ENCODE measurements at regions of chr5 and their contacts with region 1.

Region 1: GRCh38 chr5:76544268-76544926 is 78.8 kb downstream of the F2RL2 start:
- DNase-seq: peak; percentile 37 to 85 (median 57)
- ATAC-seq: peak; percentile 20
- H3K4me3 ChIP-seq: peak overlapping the region; percentile 7
- H3K4me3 Mint-ChIP-seq: peak overlapping the region; percentile 78
- H3K27ac ChIP-seq: peak overlapping the region; percentile 77 to 80
- H3K27ac Mint-ChIP-seq: peak overlapping the region; percentile 98
- H3K4me1 ChIP-seq: peaks cover 76% of the 10 kb centered on the region
- H3K4me1 Mint-ChIP-seq: peaks cover 84% of the 10 kb centered on the region
- H3K27me3 ChIP-seq: no peaks in the 10 kb centered on the region
- H3K27me3 Mint-ChIP-seq: no peaks in the 10 kb centered on the region
- CTCF ChIP-seq: peak; percentile 86

Region 2: GRCh38 chr5:76074487-76075065 is 469.8 kb before region 1 on chr5:
- CTCF ChIA-PET with region 1: no interaction called
- POLR2A ChIA-PET with region 1: no interaction called
- intact Hi-C with region 1: loop called in 1 of 2 experiments (anchors 10 kb)
- DNase-seq: peak in 5 of 14 experiments; percentile 9 to 50 (median 42)
- ATAC-seq: peak; percentile 66
- H3K4me3 ChIP-seq: no peak overlapping the region
- H3K4me3 Mint-ChIP-seq: no peak overlapping the region
- H3K27ac ChIP-seq: no peak overlapping the region
- H3K27ac Mint-ChIP-seq: no peak overlapping the region
- H3K4me1 ChIP-seq: no peaks in the 10 kb centered on the region
- H3K4me1 Mint-ChIP-seq: no peaks in the 10 kb centered on the region
- H3K27me3 ChIP-seq: peaks cover 8 to 15% of the 10 kb centered on the region in 2 experiments
- H3K27me3 Mint-ChIP-seq: peaks cover 89% of the 10 kb centered on the region
- CTCF ChIP-seq: peak; percentile 41

Region 3: GRCh38 chr5:76175051-76175666 is 369.2 kb before region 1 on chr5:
- CTCF ChIA-PET with region 1: interaction called, 5 read pairs
- POLR2A ChIA-PET with region 1: no interaction called
- intact Hi-C with region 1: loop called in 1 of 2 experiments (anchors 10 kb)
- DNase-seq: peak; percentile 24 to 74 (median 40)
- ATAC-seq: peak; percentile 64
- H3K4me3 ChIP-seq: no peak overlapping the region
- H3K4me3 Mint-ChIP-seq: peak overlapping the region; percentile 73
- H3K27ac ChIP-seq: peak overlapping the region in 1 of 2 donors; percentile 35
- H3K27ac Mint-ChIP-seq: no peak overlapping the region
- H3K4me1 ChIP-seq: peaks cover 14% of the 10 kb centered on the region
- H3K4me1 Mint-ChIP-seq: peaks cover 21% of the 10 kb centered on the region
- H3K27me3 ChIP-seq: no peaks in the 10 kb centered on the region
- H3K27me3 Mint-ChIP-seq: no peaks in the 10 kb centered on the region
- CTCF ChIP-seq: peak; percentile 79

Region 4: DNA sequence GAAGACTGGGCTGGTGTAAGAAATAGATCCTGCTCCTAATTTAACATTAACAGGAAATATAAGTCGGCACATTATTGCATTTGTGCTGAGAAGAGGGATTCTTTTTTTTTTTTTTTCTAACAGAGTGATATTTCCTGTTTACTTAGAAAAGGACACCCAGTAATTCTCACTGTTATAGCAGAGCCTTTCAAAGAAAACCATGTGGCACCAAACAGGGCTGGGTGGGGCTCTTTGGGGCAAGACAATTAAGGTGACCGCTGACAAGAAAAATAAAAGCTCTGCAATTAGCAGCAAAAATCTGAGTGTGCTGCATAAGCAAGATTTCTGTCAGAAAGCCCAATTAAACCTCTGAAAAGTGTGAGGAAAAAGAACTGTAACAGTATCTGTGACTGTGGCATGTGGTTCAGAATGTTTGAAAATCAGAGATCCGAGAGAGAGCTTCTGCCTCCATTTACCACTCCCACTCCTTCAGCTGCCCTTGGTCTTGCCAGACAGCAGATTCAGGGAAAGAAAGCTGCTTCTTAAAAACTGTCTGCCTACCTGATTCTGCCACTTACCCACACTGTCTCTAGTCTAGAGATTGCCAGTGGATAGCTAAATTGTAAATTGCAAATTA is 218.4 kb before region 1 on chr5:
- CTCF ChIA-PET with region 1: interaction called, 6 read pairs
- POLR2A ChIA-PET with region 1: interaction called, 18 read pairs
- intact Hi-C with region 1: no loop called
- DNase-seq: peak in 11 of 14 experiments; percentile 13 to 88 (median 45)
- ATAC-seq: peak; percentile 87
- H3K4me3 ChIP-seq: no peak overlapping the region
- H3K4me3 Mint-ChIP-seq: peak overlapping the region; percentile 59
- H3K27ac ChIP-seq: peak overlapping the region; percentile 44 to 63
- H3K27ac Mint-ChIP-seq: peak overlapping the region; percentile 87
- H3K4me1 ChIP-seq: peaks cover 59% of the 10 kb centered on the region
- H3K4me1 Mint-ChIP-seq: peaks cover 63% of the 10 kb centered on the region
- H3K27me3 ChIP-seq: no peaks in the 10 kb centered on the region
- H3K27me3 Mint-ChIP-seq: no peaks in the 10 kb centered on the region
- CTCF ChIP-seq: no peak

Region 5: DNA sequence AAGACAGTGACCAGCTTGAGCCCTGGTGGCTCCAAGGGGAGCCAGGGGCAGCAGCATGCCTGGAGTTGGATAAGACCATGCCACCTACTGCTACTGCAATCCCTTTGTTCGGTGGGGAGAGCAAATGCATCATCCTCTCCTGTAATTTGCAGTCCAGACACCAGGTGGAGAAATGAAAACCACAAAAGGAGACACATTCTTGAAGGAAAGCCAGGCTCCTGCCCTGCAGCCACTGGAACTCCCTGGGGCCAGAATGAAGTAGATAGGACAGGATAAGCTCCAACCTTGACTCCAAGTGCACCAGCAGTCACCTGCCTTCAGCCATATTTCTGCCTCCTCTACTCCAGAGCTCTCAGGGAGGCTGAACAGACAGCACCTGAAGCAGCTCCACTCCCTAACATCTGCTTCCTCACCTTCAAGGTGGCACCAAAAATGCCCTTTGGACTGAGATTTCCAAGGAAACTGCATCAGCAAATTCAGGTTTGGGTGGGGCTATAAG is 206.4 kb before region 1 on chr5:
- CTCF ChIA-PET with region 1: interaction called, 7 read pairs
- POLR2A ChIA-PET with region 1: interaction called, 5 read pairs
- intact Hi-C with region 1: loop called (anchors 1 to 2 kb)
- DNase-seq: peak in 12 of 14 experiments; percentile 8 to 80 (median 25)
- ATAC-seq: peak; percentile 82
- H3K4me3 ChIP-seq: no peak overlapping the region
- H3K4me3 Mint-ChIP-seq: no peak overlapping the region
- H3K27ac ChIP-seq: no peak overlapping the region
- H3K27ac Mint-ChIP-seq: no peak overlapping the region
- H3K4me1 ChIP-seq: peaks cover 23% of the 10 kb centered on the region
- H3K4me1 Mint-ChIP-seq: peaks cover 38% of the 10 kb centered on the region
- H3K27me3 ChIP-seq: no peaks in the 10 kb centered on the region
- H3K27me3 Mint-ChIP-seq: no peaks in the 10 kb centered on the region
- CTCF ChIP-seq: peak; percentile 72

Region 6: DNA sequence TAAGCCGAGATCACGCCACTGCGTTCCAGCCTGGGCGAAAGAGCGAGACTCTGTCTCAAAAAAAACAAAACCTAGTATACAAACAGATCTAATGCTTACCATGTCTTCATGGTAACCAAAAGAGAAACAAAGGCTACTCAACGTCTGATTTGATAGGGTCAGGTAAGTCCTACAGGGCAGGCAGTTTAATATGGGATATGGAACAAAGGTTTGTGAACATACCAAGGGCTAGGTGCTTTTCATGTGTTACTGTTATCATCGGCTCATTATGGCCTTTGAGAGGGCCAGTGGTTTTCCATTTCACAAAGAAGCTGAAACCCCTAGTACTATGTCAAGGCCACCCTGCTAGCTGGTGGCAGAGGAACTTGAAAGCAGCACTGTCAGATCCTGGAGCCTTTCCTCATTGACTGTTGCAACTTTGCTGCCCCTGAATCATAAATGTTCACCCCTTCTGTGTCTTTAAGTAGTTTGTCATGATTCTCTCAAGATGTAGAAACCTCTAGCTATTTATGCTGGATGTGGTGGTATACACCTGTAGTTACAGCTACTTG is 136.2 kb before region 1 on chr5:
- CTCF ChIA-PET with region 1: interaction called, 75 read pairs
- POLR2A ChIA-PET with region 1: interaction called, 136 read pairs
- intact Hi-C with region 1: loop called (anchors 1 to 2 kb)
- DNase-seq: peak in 1 of 14 experiments; percentile 29
- ATAC-seq: no peak
- H3K4me3 ChIP-seq: no peak overlapping the region
- H3K4me3 Mint-ChIP-seq: no peak overlapping the region
- H3K27ac ChIP-seq: no peak overlapping the region
- H3K27ac Mint-ChIP-seq: peak overlapping the region; percentile 94
- H3K4me1 ChIP-seq: peaks cover 48% of the 10 kb centered on the region
- H3K4me1 Mint-ChIP-seq: peaks cover 88% of the 10 kb centered on the region
- H3K27me3 ChIP-seq: no peaks in the 10 kb centered on the region
- H3K27me3 Mint-ChIP-seq: no peaks in the 10 kb centered on the region
- CTCF ChIP-seq: no peak

Region 7: GRCh38 chr5:76582230-76583162 is 38.1 kb after region 1 on chr5:
- CTCF ChIA-PET with region 1: interaction called, 11 read pairs
- POLR2A ChIA-PET with region 1: interaction called, 19 read pairs
- intact Hi-C with region 1: loop called in 1 of 2 experiments (anchors 2 kb)
- DNase-seq: peak in 3 of 14 experiments; percentile 8 to 65 (median 57)
- ATAC-seq: no peak
- H3K4me3 ChIP-seq: no peak overlapping the region
- H3K4me3 Mint-ChIP-seq: no peak overlapping the region
- H3K27ac ChIP-seq: peak overlapping the region in 1 of 2 donors; percentile 7
- H3K27ac Mint-ChIP-seq: peak overlapping the region; percentile 57
- H3K4me1 ChIP-seq: peaks cover 3% of the 10 kb centered on the region
- H3K4me1 Mint-ChIP-seq: peaks cover 28% of the 10 kb centered on the region
- H3K27me3 ChIP-seq: no peaks in the 10 kb centered on the region
- H3K27me3 Mint-ChIP-seq: no peaks in the 10 kb centered on the region
- CTCF ChIP-seq: no peak

Measured in CD4-positive, alpha-beta T cell (primary cell).